ENCODE measurements at regions of chr11 and their contacts with region 1.

Region 1: DNA sequence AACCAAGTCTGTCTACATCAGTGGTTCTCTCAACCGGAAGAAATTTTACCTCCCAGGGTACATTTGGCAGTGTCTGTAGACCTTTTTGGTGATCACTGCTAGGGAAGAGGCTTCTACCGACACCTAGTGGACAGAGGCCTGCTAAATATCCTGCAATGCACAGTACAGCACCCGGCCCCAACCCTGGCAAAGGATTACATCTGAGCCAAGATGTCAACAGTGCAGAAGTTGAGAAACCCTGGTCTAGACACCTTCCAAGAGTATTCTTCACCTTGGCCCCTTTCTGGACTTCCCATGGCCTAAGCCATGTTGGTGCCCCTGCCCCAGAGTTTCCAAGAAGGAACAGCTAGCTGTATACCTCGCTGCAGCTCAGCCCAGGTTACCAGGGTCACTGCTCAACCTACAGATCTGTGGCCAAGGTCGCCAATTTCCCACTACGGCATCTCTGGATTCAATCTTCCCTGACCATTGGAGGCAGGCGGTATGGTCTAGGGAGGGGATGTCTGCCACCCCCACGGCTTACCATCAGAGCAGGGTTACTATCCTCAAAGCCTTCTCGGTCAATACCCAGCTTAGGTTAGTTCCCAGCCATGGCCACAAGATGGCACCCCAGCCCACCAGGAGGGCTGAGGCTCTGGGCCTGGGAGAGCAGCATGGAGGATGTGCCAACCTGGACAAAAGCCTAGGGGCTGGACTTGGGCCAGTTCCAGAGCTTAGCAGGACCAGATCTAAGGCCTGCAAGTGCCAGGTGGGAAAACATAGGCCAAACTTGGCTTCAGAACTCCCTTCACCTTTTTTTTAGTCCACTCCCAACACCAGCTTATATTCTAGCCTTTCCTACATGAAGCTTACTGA is 3.7 kb upstream of the KCNC1 start:
- DNase-seq: peak; percentile 90
- H3K4me3 Mint-ChIP-seq: no peak overlapping the region
- H3K27ac Mint-ChIP-seq: no peak overlapping the region
- H3K4me1 Mint-ChIP-seq: no peaks in the 10 kb centered on the region
- H3K27me3 Mint-ChIP-seq: peaks cover 44% of the 10 kb centered on the region
- CTCF ChIP-seq: peak; percentile 94

Region 2: GRCh38 chr11:17743808-17744119 is 12.9 kb after region 1 on chr11:
- CTCF ChIA-PET with region 1: interaction called, 30 read pairs
- POLR2A ChIA-PET with region 1: interaction called, 3 read pairs
- intact Hi-C with region 1: no loop called
- DNase-seq: peak; percentile 43
- H3K4me3 Mint-ChIP-seq: no peak overlapping the region
- H3K27ac Mint-ChIP-seq: no peak overlapping the region
- H3K4me1 Mint-ChIP-seq: peaks cover 6% of the 10 kb centered on the region
- H3K27me3 Mint-ChIP-seq: no peaks in the 10 kb centered on the region
- CTCF ChIP-seq: no peak

Region 3: GRCh38 chr11:17821648-17822400 is 91.0 kb after region 1 on chr11:
- CTCF ChIA-PET with region 1: interaction called, 72 read pairs
- POLR2A ChIA-PET with region 1: interaction called, 5 read pairs
- intact Hi-C with region 1: loop called (anchors 1 kb)
- DNase-seq: peak; percentile 74
- H3K4me3 Mint-ChIP-seq: no peak overlapping the region
- H3K27ac Mint-ChIP-seq: no peak overlapping the region
- H3K4me1 Mint-ChIP-seq: no peaks in the 10 kb centered on the region
- H3K27me3 Mint-ChIP-seq: no peaks in the 10 kb centered on the region
- CTCF ChIP-seq: no peak

Region 4: DNA sequence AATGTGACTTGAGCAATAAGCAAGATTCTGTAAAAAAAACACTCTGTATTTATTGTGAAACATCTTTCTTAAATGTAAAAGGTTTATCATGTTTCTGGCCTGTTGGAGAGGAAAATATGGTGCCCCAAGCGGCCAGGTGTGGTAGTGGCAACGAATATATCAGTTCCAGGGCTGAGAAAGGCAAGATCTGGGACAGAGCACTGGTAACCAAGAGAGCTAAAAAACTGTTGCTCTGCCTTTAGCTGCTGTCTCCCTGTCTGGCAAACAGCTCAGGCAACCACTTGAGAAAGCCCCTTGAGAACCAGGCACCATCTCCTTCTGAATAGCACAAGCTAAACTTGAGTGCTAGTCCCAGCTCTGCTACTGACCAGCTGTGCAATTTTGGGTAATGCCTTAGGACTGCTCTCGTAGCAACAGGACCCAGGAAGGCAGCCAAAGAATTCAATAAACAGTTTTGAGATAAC is 133.7 kb after region 1 on chr11:
- CTCF ChIA-PET with region 1: interaction called, 40 read pairs
- POLR2A ChIA-PET with region 1: no interaction called
- intact Hi-C with region 1: no loop called
- DNase-seq: peak; percentile 49
- H3K4me3 Mint-ChIP-seq: no peak overlapping the region
- H3K27ac Mint-ChIP-seq: no peak overlapping the region
- H3K4me1 Mint-ChIP-seq: no peaks in the 10 kb centered on the region
- H3K27me3 Mint-ChIP-seq: no peaks in the 10 kb centered on the region
- CTCF ChIP-seq: peak; percentile 62

Region 5: DNA sequence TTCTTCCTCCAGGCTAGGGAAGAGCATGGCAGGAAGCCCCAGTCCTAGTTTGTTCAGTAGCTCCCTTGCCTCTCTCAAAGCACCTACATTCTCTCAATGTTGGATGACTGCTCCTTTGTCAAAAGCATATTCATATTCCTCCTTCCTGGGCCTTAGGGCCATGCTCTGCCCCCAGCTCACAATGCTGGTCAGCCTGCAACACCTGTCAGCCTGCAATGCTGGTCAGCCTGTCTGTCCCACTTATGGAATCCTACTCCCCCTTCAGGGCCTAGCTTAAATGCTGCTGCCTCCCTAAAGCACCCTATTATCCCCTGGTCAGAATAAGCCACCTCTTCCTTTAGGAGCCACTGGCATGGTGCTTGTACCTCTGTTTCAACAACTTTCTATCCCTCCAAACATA is 236.8 kb after region 1 on chr11:
- CTCF ChIA-PET with region 1: interaction called, 507 read pairs
- POLR2A ChIA-PET with region 1: interaction called, 16 read pairs
- intact Hi-C with region 1: no loop called
- DNase-seq: no peak
- H3K4me3 Mint-ChIP-seq: no peak overlapping the region
- H3K27ac Mint-ChIP-seq: no peak overlapping the region
- H3K4me1 Mint-ChIP-seq: peaks cover 1% of the 10 kb centered on the region
- H3K27me3 Mint-ChIP-seq: no peaks in the 10 kb centered on the region
- CTCF ChIP-seq: no peak

Region 6: DNA sequence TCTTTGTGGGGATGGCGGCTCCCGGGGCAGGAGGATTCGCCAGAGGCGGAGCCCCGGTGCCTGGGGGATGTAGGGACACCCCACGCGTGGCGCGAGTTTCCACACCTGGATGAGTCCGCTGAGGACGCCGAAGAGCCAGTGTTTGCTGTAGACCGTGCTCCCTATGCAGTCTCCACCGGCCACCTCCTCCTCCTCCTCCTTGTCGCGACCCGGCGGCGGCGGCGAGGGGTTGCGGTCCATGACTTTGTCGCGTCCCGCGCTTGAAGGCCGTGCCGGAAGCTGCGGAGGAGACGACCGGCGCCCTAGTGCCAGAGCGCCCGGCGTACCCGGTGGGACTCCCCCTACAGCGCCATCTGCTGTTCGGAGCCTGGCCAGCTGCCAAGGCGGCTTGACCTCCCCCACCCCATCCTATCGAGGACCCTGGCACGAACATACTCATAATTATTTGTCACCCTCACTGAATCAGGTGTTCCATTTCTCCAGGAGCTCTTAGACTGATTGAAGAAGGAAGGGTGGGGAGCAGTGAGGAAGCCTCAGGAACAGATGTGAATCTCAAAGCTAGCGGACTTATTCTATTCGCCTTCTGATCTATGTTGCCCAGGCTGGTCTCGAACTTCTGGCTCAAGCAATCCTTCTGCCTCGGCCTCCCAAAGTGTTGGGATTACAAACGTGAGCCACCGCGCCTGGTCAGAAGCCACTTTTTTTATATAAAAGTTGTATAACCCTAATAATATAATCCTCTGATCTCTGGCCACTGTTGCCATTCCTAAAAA is 375.2 kb after region 1 on chr11 and contains the start of gene SAAL1:
- CTCF ChIA-PET with region 1: interaction called, 10 read pairs
- POLR2A ChIA-PET with region 1: no interaction called
- intact Hi-C with region 1: no loop called
- DNase-seq: peak; percentile 82
- H3K4me3 Mint-ChIP-seq: peak within 1 kb of the TSS; percentile 94
- H3K27ac Mint-ChIP-seq: peak within 1 kb of the TSS; percentile 87
- H3K4me1 Mint-ChIP-seq: peaks cover 19% of the 10 kb centered on the region
- H3K27me3 Mint-ChIP-seq: peaks cover 16% of the 10 kb centered on the region
- CTCF ChIP-seq: peak; percentile 68
- total RNA-seq, gene SAAL1: 21.6 and 34.3 TPM in 2 replicates

Measured in MCF 10A (cell line).